MCF 10A (cell line): ENCODE measurements at regions of chr12 and their contacts with region 1.

Region 1: GRCh38 chr12:117236456-117237001 is 46.3 kb upstream of the FBXO21 start:
- DNase-seq: peak; percentile 75
- H3K4me3 Mint-ChIP-seq: no peak overlapping the region
- H3K27ac Mint-ChIP-seq: no peak overlapping the region
- H3K4me1 Mint-ChIP-seq: no peaks in the 10 kb centered on the region
- H3K27me3 Mint-ChIP-seq: no peaks in the 10 kb centered on the region
- CTCF ChIP-seq: peak; percentile 73

Region 2: GRCh38 chr12:117182866-117183265 is 53.7 kb before region 1 on chr12:
- CTCF ChIA-PET with region 1: no interaction called
- POLR2A ChIA-PET with region 1: no interaction called
- intact Hi-C with region 1: no loop called
- DNase-seq: no peak
- H3K4me3 Mint-ChIP-seq: no peak overlapping the region
- H3K27ac Mint-ChIP-seq: no peak overlapping the region
- H3K4me1 Mint-ChIP-seq: no peaks in the 10 kb centered on the region
- H3K27me3 Mint-ChIP-seq: no peaks in the 10 kb centered on the region
- CTCF ChIP-seq: no peak

Region 3: DNA sequence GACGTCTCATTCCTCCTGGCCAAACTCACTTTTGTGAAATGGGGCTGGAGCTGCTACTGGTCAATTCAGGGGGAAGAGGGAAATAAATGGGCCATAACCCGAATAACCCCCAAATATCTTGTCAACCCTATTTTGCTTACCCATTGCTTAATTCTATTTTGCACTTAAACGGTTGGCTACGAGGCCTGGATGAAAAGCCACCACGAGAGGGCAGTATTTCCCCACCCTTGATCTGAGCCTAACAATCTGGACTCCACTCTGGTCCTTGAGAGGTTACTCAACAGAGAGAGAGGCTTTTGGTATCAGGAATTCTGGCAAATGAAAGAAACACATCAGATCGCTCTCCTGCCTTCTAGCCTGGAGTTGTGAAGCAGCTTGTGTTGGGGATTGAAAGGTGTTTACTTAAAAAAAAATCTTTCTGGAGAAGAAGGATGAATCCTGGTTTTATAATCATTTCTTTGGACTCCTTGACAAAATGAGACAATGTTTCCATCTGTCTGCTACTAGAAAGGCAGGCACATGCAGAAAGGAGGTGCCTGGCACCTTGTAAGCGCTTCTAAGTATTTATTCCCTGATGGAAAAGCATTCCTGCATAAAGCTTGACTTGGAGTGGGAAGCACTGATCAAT is 23.9 kb before region 1 on chr12:
- CTCF ChIA-PET with region 1: interaction called, 28 read pairs
- POLR2A ChIA-PET with region 1: no interaction called
- intact Hi-C with region 1: loop called (anchors 2 kb)
- DNase-seq: peak; percentile 86
- H3K4me3 Mint-ChIP-seq: no peak overlapping the region
- H3K27ac Mint-ChIP-seq: no peak overlapping the region
- H3K4me1 Mint-ChIP-seq: no peaks in the 10 kb centered on the region
- H3K27me3 Mint-ChIP-seq: peaks cover 70% of the 10 kb centered on the region
- CTCF ChIP-seq: peak; percentile 82

Region 4: DNA sequence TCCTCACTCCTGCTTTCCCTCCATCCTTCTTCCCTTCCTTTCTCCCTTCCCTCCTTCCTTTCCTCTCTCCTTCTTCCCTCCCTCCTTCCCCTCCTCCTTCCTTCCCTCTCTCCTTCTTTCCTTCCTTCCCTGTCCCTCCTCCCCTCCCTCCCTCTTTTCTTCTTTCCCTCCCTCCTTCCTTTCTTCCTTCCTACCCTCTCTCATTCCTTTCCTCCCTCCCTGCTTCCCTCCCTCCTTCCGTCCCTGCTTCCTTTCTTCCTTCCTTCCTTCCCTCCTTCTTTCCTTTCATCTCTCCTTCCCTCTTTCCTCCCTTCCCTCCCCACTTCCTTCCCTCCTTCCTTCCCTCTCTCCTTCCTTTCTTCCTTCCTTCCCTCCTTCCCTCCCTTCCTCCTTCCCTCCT is 85.9 kb after region 1 on chr12:
- CTCF ChIA-PET with region 1: interaction called, 10 read pairs
- POLR2A ChIA-PET with region 1: no interaction called
- intact Hi-C with region 1: no loop called
- DNase-seq: no peak
- H3K4me3 Mint-ChIP-seq: no peak overlapping the region
- H3K27ac Mint-ChIP-seq: no peak overlapping the region
- H3K4me1 Mint-ChIP-seq: no peaks in the 10 kb centered on the region
- H3K27me3 Mint-ChIP-seq: no peaks in the 10 kb centered on the region
- CTCF ChIP-seq: no peak

Region 5: GRCh38 chr12:117830471-117830870 is 593.9 kb after region 1 on chr12:
- CTCF ChIA-PET with region 1: interaction called, 12 read pairs
- POLR2A ChIA-PET with region 1: no interaction called
- intact Hi-C with region 1: no loop called
- DNase-seq: no peak
- H3K4me3 Mint-ChIP-seq: no peak overlapping the region
- H3K27ac Mint-ChIP-seq: no peak overlapping the region
- H3K4me1 Mint-ChIP-seq: no peaks in the 10 kb centered on the region
- H3K27me3 Mint-ChIP-seq: peaks cover 10% of the 10 kb centered on the region
- CTCF ChIP-seq: no peak

Region 6: DNA sequence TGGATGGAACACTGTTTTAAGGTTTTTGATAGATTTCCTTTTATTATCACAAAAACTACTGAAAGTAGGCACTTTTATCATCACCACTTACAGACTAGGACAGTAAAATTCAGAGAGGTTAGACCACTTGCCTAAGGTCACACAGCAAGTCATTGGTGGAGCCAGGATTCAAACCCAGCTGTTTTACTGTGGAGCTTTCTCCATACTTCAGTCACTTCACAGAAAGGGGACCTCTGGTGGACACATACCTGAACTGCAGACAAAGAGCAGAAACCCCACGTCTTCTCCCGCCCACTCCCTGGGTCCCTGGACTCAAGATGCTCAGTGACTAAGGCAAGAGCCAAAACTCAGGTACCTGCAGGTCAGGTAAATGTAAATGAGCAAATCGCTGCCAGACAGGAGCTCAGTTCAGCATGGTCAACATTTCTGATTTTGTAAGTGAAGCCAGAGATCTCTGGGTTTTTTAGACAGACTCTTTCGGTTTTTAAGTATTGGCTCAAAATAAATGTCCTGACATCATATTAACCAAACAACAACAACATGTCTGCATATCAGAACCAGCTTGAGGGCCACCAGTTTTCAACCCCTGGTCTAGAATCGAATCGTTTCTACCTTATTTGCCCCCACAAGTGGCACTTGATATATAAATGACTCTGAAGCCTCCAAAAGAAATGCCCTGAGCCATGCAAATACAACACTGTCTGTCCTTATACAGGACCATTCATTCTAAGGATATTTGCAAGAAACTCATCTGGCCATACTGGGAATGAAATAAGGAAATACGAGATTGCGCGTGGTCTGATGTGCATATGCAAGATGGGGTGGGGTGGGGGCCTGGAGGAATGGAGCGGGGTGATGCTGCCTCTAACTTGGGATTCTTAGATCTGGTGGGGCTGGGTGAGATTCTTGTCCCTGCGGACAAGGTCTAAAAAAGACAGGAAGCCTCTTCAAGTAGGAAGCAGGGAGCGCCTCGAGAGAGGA is 621.4 kb after region 1 on chr12:
- CTCF ChIA-PET with region 1: interaction called, 16 read pairs
- POLR2A ChIA-PET with region 1: no interaction called
- intact Hi-C with region 1: no loop called
- DNase-seq: peak; percentile 65
- H3K4me3 Mint-ChIP-seq: no peak overlapping the region
- H3K27ac Mint-ChIP-seq: no peak overlapping the region
- H3K4me1 Mint-ChIP-seq: no peaks in the 10 kb centered on the region
- H3K27me3 Mint-ChIP-seq: no peaks in the 10 kb centered on the region
- CTCF ChIP-seq: peak; percentile 38